PC-3 (cell line): ENCODE measurements at regions of chr4 and their contacts with region 1.

Region 1: GRCh38 chr4:133154725-133155124 is 5.6 kb downstream of the PCDH10 start:
- DNase-seq: peak; percentile 35
- ATAC-seq: peak; percentile 40
- H3K4me3 ChIP-seq: no peak overlapping the region
- H3K27ac ChIP-seq: no peak overlapping the region
- H3K4me1 ChIP-seq: no peaks in the 10 kb centered on the region
- H3K27me3 ChIP-seq: no peaks in the 10 kb centered on the region
- CTCF ChIP-seq: peak; percentile 72

Region 2: DNA sequence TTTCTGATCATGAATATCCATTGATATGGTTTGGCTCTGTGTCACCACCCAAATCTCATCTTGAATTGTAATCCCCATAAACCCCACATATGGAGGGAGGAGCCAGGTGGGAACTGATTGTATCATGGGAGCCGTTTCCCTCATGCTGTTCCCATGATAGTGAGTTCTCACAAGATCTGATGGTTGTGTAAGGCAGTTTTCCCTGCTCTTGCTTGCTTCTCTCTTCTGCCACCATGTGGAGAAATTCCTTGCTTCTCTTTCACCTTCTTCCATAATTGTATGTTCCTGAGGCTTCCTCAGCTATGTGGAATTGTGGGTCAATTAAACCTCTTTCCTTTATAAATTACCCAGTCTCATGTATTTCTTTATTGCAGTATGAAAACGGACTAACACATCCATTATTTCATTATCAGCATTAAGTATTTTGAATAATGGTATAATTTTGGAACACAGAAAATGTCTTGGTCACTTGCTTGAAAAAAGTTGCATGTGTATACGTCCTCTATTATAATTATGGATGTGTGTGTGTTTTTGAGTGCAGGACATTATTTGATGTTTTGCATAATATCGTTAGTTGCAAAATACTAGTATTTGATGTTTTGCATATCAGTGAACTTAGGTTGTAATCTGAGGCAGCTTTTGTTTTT is 329.0 kb after region 1 on chr4:
- CTCF ChIA-PET with region 1: interaction called, 8 read pairs
- POLR2A ChIA-PET with region 1: no interaction called
- intact Hi-C with region 1: loop called (anchors 1 kb)
- DNase-seq: peak; percentile 45
- ATAC-seq: peak; percentile 78
- H3K4me3 ChIP-seq: no peak overlapping the region
- H3K27ac ChIP-seq: no peak overlapping the region
- H3K4me1 ChIP-seq: no peaks in the 10 kb centered on the region
- H3K27me3 ChIP-seq: no peaks in the 10 kb centered on the region
- CTCF ChIP-seq: peak; percentile 55

Region 3: GRCh38 chr4:133921280-133922195 is 766.8 kb after region 1 on chr4:
- CTCF ChIA-PET with region 1: no interaction called
- POLR2A ChIA-PET with region 1: no interaction called
- intact Hi-C with region 1: loop called (anchors 10 kb)
- DNase-seq: peak; percentile 10
- ATAC-seq: no peak
- H3K4me3 ChIP-seq: no peak overlapping the region
- H3K27ac ChIP-seq: no peak overlapping the region
- H3K4me1 ChIP-seq: no peaks in the 10 kb centered on the region
- H3K27me3 ChIP-seq: no peaks in the 10 kb centered on the region
- CTCF ChIP-seq: no peak

Region 4: GRCh38 chr4:134132079-134132764 is 977.5 kb after region 1 on chr4:
- CTCF ChIA-PET with region 1: interaction called, 5 read pairs
- POLR2A ChIA-PET with region 1: no interaction called
- intact Hi-C with region 1: loop called (anchors 1 kb)
- DNase-seq: peak; percentile 45
- ATAC-seq: peak; percentile 70
- H3K4me3 ChIP-seq: no peak overlapping the region
- H3K27ac ChIP-seq: no peak overlapping the region
- H3K4me1 ChIP-seq: no peaks in the 10 kb centered on the region
- H3K27me3 ChIP-seq: no peaks in the 10 kb centered on the region
- CTCF ChIP-seq: peak; percentile 47